ACHN (cell line): ENCODE measurements at regions of chr2 and their contacts with region 1.

Region 1: DNA sequence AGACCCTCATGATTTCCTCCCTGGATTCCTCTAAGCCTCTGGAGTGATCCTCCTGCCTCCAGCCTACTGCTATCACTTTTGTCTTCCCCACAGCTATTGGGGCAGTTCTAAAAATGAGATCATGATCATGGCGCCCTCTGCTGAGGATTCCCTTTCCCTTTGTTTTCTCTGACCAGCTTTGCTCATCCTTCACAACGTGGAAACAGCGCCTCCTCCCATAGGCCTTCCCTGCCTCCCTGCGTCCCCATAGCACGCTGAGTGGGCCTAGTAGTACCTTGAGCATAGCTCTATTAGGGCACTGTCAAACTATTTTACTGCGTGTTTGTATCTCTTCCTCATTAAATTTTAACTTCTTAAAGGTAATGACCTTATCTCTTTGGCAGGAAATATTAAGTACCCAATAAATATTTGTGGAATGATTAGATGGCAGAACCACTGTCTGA is 207.0 kb upstream of the FANCL start:
- DNase-seq: peak; percentile 89

Region 2: DNA sequence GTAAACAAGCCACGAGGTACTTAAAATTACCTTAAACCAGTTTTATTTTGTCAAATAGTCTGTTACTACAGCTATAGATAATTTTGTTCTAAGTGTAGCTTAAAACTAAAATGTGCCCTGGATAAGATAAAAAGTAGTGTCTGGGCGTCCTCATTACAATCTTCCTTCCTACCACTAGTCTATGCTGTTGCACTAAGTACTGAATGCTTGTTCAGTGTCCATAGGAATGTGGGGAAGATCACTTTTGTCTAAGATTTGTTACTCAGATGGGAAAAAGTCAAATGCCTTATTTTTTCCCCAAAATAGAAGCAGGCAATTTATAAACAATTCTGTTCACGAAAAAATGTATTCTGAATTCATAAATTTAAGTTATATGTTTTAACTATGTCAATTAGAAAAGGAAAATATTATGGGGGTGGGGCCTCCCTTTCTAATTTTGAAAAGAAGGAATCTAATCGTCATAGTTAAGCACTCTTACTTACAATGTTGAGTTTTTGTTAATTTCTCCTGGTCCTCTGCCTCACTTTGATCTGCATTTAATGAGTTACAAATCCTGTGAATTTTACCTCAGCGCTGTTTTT is 541.8 kb before region 1 on chr2:
- in situ Hi-C with region 1: loop called (anchors 25 kb)
- DNase-seq: peak; percentile 76